ENCODE measurements at regions of chr6 and their contacts with region 1.

Region 1: GRCh38 chr6:134253681-134254080 is 64.2 kb downstream of the SGK1 start:
- DNase-seq: no peak
- ATAC-seq: no peak
- H3K4me3 ChIP-seq: no peak overlapping the region
- H3K4me3 Mint-ChIP-seq: no peak overlapping the region
- H3K27ac ChIP-seq: no peak overlapping the region
- H3K27ac Mint-ChIP-seq: no peak overlapping the region
- H3K4me1 ChIP-seq: peaks cover 13 to 22% of the 10 kb centered on the region in 2 experiments
- H3K4me1 Mint-ChIP-seq: peaks cover 22 to 31% (median 25%) of the 10 kb centered on the region in 3 donors
- H3K27me3 ChIP-seq: no peaks in the 10 kb centered on the region
- H3K27me3 Mint-ChIP-seq: no peaks in the 10 kb centered on the region

Region 2: DNA sequence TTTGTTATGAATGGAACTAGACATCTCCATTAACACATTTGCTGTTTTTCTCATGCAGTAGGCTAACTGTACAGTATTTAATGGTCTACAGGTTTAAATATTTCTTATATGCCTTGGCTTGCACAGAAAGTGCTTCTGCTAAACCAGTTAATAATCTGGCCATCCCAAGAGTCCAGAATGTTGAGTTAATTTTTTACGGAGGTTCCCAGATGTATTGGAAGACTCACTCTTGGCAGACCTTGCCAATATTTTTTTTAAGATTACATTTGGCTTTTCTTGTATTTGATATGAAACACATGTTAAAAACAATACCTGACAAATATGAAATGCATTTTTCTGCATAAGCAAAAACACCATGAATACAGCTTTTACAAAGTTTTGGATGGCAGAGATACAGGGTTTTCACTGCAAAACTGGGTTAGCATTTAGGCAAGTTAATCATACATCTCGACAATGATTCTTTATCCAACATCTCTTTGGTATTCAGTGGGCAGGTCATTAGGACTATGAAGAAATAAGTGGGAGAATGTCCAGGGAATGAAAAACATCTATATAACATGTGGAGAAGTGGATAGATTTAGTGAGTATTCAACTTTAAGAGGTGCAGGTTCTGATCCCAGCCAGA is 29.8 kb before region 1 on chr6:
- CTCF ChIA-PET with region 1: interaction called in 1 of 2 experiments, 12 read pairs
- POLR2A ChIA-PET with region 1: interaction called in 1 of 2 experiments, 8 read pairs
- DNase-seq: no peak
- ATAC-seq: no peak
- H3K4me3 ChIP-seq: no peak overlapping the region
- H3K4me3 Mint-ChIP-seq: no peak overlapping the region
- H3K27ac ChIP-seq: no peak overlapping the region
- H3K27ac Mint-ChIP-seq: no peak overlapping the region
- H3K4me1 ChIP-seq: no peaks in the 10 kb centered on the region
- H3K4me1 Mint-ChIP-seq: peaks cover 0 to 1% (median 0%) of the 10 kb centered on the region in 3 donors
- H3K27me3 ChIP-seq: no peaks in the 10 kb centered on the region
- H3K27me3 Mint-ChIP-seq: no peaks in the 10 kb centered on the region

Region 3: GRCh38 chr6:134398453-134398852 is 144.8 kb after region 1 on chr6:
- CTCF ChIA-PET with region 1: no interaction called
- POLR2A ChIA-PET with region 1: no interaction called
- DNase-seq: no peak
- ATAC-seq: no peak
- H3K4me3 ChIP-seq: no peak overlapping the region
- H3K4me3 Mint-ChIP-seq: no peak overlapping the region
- H3K27ac ChIP-seq: no peak overlapping the region
- H3K27ac Mint-ChIP-seq: no peak overlapping the region
- H3K4me1 ChIP-seq: peaks cover 0 to 2% of the 10 kb centered on the region in 2 experiments
- H3K4me1 Mint-ChIP-seq: peaks cover 5 to 31% (median 6%) of the 10 kb centered on the region in 3 donors
- H3K27me3 ChIP-seq: no peaks in the 10 kb centered on the region
- H3K27me3 Mint-ChIP-seq: peaks cover 0 to 4% of the 10 kb centered on the region in 2 donors

Region 4: DNA sequence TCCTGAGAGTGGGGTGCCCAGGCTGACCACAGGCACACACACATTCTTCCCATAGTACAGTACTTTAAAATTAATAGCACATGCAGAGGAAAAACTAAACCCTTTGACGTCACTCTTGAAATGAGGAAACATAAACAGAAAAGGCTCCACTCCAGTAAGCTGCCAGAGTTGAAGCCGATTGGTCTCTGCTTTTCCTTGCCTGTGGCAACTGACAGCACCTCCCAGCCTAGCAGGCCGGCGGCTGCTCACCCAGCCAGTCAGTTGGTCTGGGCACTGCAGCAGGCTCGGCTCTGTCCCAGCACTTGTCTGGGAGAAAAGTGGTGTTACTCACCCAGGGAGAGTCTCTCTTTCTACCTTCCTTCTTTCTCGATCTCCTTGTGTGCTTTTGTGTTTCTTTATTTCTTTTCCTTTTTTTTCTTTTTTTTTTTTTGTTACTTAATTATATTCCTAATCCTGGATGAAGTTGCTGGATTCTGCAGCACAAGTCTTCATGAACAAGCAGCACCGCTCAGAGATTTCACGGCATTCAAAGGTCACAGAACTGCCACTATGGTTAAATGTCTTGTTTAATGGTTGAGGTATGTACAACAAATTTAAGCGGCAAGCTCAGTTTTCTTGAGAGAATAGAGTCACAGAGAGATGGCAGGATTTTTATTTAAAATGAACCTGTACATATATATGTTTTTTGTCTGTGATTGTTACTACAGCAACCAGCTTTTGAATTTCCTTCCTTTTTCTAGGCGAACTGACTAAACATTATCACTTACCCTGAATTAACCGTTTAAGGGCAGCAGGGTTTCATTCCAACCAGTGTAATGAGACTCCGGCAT is 1598.0 kb after region 1 on chr6 and contains the start of gene PDE7B:
- CTCF ChIA-PET with region 1: no interaction called
- POLR2A ChIA-PET with region 1: interaction called in 1 of 2 experiments, 14 read pairs
- DNase-seq: peak in 32 of 35 experiments; percentile 5 to 58 (median 24)
- ATAC-seq: peak; percentile 52 to 86 (median 72)
- H3K4me3 ChIP-seq: peak within 1 kb of the TSS; percentile 44 to 62
- H3K4me3 Mint-ChIP-seq: peak within 1 kb of the TSS; percentile 72 to 82 (median 78)
- H3K27ac ChIP-seq: peak within 1 kb of the TSS; percentile 40
- H3K27ac Mint-ChIP-seq: peak within 1 kb of the TSS; percentile 76 to 79
- H3K4me1 ChIP-seq: peaks cover 7 to 23% of the 10 kb centered on the region in 2 experiments
- H3K4me1 Mint-ChIP-seq: peaks cover 22 to 27% (median 27%) of the 10 kb centered on the region in 3 donors
- H3K27me3 ChIP-seq: peaks cover 0 to 3% of the 10 kb centered on the region in 2 experiments
- H3K27me3 Mint-ChIP-seq: peaks cover 0 to 2% of the 10 kb centered on the region in 2 donors
- total RNA-seq, gene PDE7B: 0.35 to 1.5 (median 0.69) TPM